A549 (cell line): ENCODE measurements at regions of chr1 and their contacts with region 1.

Region 1: GRCh38 chr1:178310685-178311105 is 186.1 kb downstream of the CLEC20A start:
- DNase-seq: peak; percentile 64 to 76
- ATAC-seq: peak; percentile 89 to 91
- H3K4me3 ChIP-seq: no peak overlapping the region
- H3K27ac ChIP-seq: no peak overlapping the region
- H3K4me1 ChIP-seq: 0 out of 3 replicates have a peak, but pooled peaks cover 7% of the 10 kb centered on the region
- CTCF ChIP-seq: peak; percentile 86
- EP300 ChIP-seq: no peak
- POLR2A ChIP-seq: no peak
- RAD21 ChIP-seq: peak; percentile 83 to 89

Region 2: DNA sequence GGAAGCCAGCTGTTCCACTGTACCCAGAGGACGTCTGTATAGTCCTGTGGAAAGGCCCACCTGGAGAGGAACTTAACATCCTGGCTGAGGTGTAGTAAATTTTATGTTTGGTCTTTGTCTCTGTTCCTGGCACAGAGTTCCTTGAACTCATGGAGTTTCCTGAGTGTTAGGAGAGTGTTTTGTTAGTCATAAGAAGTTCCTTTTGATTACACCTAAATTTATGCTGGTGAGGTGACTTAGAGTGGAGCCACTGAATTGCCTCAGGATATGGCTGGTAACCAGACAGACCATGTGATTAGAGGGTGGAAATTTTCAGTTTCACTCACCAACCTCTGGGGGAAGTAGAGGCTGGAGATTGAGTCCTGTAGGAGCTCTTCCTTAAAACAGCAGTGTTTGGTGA is 158.9 kb before region 1 on chr1:
- CTCF ChIA-PET with region 1: no interaction called
- POLR2A ChIA-PET with region 1: no interaction called
- DNase-seq: no peak
- ATAC-seq: no peak; a peak in 1 of 6 replicates
- H3K4me3 ChIP-seq: no peak overlapping the region
- H3K27ac ChIP-seq: no peak overlapping the region
- H3K4me1 ChIP-seq: peaks cover 17% of the 10 kb centered on the region
- CTCF ChIP-seq: no peak
- EP300 ChIP-seq: no peak
- POLR2A ChIP-seq: no peak
- RAD21 ChIP-seq: no peak

Region 3: GRCh38 chr1:178294654-178295053 is 16.0 kb before region 1 on chr1:
- CTCF ChIA-PET with region 1: interaction called, 51 read pairs
- POLR2A ChIA-PET with region 1: no interaction called
- DNase-seq: no peak
- ATAC-seq: peak; percentile 72 to 76
- H3K4me3 ChIP-seq: no peak overlapping the region
- H3K27ac ChIP-seq: no peak overlapping the region
- H3K4me1 ChIP-seq: no peaks in the 10 kb centered on the region
- CTCF ChIP-seq: no peak
- EP300 ChIP-seq: no peak
- POLR2A ChIP-seq: no peak
- RAD21 ChIP-seq: no peak

Region 4: DNA sequence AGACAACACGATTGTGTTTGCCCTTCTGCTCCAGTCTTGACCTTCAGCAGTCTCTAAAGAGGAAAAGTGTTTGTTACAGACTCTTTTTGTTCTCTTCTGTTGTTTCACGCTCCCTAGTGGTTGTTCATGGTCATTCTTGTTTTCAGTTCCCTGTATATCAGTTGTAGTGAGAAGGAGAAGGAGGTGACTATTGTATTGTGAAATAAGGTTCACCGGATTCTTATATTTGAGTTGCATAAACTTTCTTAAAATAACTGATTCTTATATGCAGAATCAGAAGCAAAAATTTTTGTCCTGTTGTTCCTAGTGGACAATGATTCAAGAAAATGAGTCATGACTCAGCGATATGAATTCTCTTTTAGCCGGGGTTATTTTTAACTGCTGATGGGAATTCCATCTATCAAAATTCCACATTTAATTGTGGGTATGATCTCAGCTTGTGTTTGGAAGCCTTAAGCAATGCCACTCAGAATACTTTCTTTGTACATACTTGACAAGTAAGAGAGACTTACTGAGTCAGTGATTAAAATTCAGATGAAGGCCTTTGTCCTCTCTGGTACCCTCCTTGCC is 33.9 kb after region 1 on chr1:
- CTCF ChIA-PET with region 1: interaction called, 11 read pairs
- POLR2A ChIA-PET with region 1: no interaction called
- DNase-seq: peak; percentile 17 to 62
- ATAC-seq: peak; percentile 89 to 94
- H3K4me3 ChIP-seq: no peak overlapping the region
- H3K27ac ChIP-seq: peak overlapping the region; percentile 30 to 63; a peak in 4 of 6 replicates
- H3K4me1 ChIP-seq: peaks cover 29% of the 10 kb centered on the region
- CTCF ChIP-seq: peak; percentile 62
- EP300 ChIP-seq: no peak
- POLR2A ChIP-seq: no peak
- RAD21 ChIP-seq: peak; percentile 41 to 54; a peak in 4 of 5 replicates

Region 5: DNA sequence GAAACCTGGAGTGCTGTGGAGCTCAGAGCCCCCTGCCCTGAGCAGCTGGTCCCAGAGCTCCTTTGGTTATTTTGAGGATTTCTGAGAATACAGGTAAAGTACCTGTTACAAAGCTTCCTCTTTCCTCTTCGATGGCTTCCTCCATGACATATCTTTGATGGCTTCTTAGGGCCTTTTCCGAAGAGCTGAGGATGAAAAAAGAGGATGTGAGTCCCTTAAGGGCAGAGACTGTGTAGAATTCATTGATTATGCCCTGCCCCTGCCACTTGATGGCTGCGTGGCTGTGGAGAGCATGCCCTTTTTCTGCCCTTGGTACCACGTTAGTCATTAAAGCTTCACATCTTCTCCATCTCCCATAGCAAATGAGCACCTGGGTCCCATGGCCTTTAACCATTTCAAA is 216.4 kb after region 1 on chr1:
- CTCF ChIA-PET with region 1: interaction called, 26 read pairs
- POLR2A ChIA-PET with region 1: no interaction called
- DNase-seq: no peak
- ATAC-seq: no peak
- H3K4me3 ChIP-seq: no peak overlapping the region
- H3K27ac ChIP-seq: no peak overlapping the region
- H3K4me1 ChIP-seq: peaks cover 12% of the 10 kb centered on the region
- CTCF ChIP-seq: no peak
- EP300 ChIP-seq: no peak
- POLR2A ChIP-seq: no peak
- RAD21 ChIP-seq: no peak

Region 6: GRCh38 chr1:178542560-178543356 is 232.1 kb after region 1 on chr1:
- CTCF ChIA-PET with region 1: interaction called, 10 read pairs
- POLR2A ChIA-PET with region 1: interaction called, 4 read pairs
- DNase-seq: peak; percentile 78 to 86
- ATAC-seq: peak; percentile 88 to 91
- H3K4me3 ChIP-seq: peak overlapping the region; percentile 77
- H3K27ac ChIP-seq: peak overlapping the region; percentile 94 to 98
- H3K4me1 ChIP-seq: peaks cover 45% of the 10 kb centered on the region
- CTCF ChIP-seq: peak; percentile 97
- EP300 ChIP-seq: no peak
- POLR2A ChIP-seq: no peak
- RAD21 ChIP-seq: peak; percentile 80 to 95